Breast epithelium (tissue), 4 donors: ENCODE measurements at regions of chr10 and their contacts with region 1.

Region 1: DNA sequence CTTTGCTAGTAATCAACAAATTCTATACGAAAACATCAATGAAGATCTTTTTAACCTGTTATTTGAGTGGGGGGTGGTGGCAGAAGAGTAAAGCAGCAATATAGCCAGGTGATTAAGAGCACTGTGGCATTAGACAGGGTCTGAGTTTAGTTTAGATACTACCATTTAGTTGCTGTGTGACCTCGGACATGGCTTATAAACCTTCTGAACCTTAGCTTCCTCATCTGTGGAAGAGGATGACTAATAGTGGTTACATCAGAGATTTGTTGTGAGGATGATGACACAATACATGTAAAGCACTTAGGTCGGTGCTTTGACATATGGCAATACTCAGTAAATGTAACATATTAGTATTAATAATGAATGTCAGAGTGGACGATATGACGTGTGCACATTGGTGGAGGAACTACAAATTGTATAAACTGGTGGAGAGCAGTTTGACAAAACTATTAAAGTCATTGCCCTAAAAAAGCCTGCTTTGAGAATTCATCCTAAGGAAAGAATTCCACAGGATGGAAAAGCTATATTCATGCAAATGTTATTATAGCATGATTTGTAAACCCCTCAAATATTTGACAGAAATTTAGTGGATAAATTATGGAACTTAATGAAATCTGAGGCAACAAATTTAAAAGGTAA is 24.3 kb downstream of the SPAG6 start:
- DNase-seq: no peak
- H3K4me3 ChIP-seq: no peak overlapping the region
- H3K27ac ChIP-seq: no peak overlapping the region
- H3K4me1 ChIP-seq: no peaks in the 10 kb centered on the region
- H3K27me3 ChIP-seq: no peaks in the 10 kb centered on the region
- CTCF ChIP-seq: no peak
- POLR2A ChIP-seq: no peak

Region 2: GRCh38 chr10:22158426-22158825 is 211.1 kb before region 1 on chr10:
- intact Hi-C with region 1: no loop called
- DNase-seq: no peak
- H3K4me3 ChIP-seq: no peak overlapping the region
- H3K27ac ChIP-seq: no peak overlapping the region
- H3K4me1 ChIP-seq: no peaks in the 10 kb centered on the region
- H3K27me3 ChIP-seq: no peaks in the 10 kb centered on the region
- CTCF ChIP-seq: no peak
- POLR2A ChIP-seq: no peak

Region 3: GRCh38 chr10:22271786-22272185 is 97.8 kb before region 1 on chr10:
- intact Hi-C with region 1: loop called (anchors 10 kb)
- DNase-seq: no peak
- H3K4me3 ChIP-seq: no peak overlapping the region
- H3K27ac ChIP-seq: no peak overlapping the region
- H3K4me1 ChIP-seq: no peaks in the 10 kb centered on the region
- H3K27me3 ChIP-seq: no peaks in the 10 kb centered on the region
- CTCF ChIP-seq: no peak
- POLR2A ChIP-seq: no peak

Region 4: DNA sequence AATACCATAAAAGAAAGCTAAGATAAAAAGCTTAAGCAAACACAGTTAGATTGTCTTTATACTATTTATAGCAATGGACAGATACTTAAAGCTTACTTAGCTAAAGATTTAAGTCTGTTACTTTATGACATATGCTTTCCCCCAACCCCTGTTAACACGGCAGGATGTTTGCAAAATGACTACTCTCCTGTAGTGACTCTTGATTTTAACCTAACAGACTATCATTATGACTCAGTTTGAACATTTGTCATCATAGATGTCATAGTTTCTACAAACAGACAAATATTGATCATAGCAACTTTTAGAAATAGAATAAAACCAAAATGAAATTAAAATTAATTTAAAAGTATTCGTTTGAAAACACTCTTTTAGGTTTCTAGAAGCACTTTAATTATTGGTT is 61.2 kb before region 1 on chr10:
- intact Hi-C with region 1: no loop called
- DNase-seq: no peak
- H3K4me3 ChIP-seq: no peak overlapping the region
- H3K27ac ChIP-seq: no peak overlapping the region
- H3K4me1 ChIP-seq: no peaks in the 10 kb centered on the region
- H3K27me3 ChIP-seq: no peaks in the 10 kb centered on the region
- CTCF ChIP-seq: no peak
- POLR2A ChIP-seq: no peak

Region 5: GRCh38 chr10:22573820-22574569 is 204.4 kb after region 1 on chr10:
- intact Hi-C with region 1: no loop called
- DNase-seq: no peak
- H3K4me3 ChIP-seq: no peak overlapping the region
- H3K27ac ChIP-seq: no peak overlapping the region
- H3K4me1 ChIP-seq: no peaks in the 10 kb centered on the region
- H3K27me3 ChIP-seq: no peaks in the 10 kb centered on the region
- CTCF ChIP-seq: peak in 1 of 3 donors; percentile 25
- POLR2A ChIP-seq: no peak